PC-3 (cell line): ENCODE measurements at regions of chr12 and their contacts with region 1.

Region 1: DNA sequence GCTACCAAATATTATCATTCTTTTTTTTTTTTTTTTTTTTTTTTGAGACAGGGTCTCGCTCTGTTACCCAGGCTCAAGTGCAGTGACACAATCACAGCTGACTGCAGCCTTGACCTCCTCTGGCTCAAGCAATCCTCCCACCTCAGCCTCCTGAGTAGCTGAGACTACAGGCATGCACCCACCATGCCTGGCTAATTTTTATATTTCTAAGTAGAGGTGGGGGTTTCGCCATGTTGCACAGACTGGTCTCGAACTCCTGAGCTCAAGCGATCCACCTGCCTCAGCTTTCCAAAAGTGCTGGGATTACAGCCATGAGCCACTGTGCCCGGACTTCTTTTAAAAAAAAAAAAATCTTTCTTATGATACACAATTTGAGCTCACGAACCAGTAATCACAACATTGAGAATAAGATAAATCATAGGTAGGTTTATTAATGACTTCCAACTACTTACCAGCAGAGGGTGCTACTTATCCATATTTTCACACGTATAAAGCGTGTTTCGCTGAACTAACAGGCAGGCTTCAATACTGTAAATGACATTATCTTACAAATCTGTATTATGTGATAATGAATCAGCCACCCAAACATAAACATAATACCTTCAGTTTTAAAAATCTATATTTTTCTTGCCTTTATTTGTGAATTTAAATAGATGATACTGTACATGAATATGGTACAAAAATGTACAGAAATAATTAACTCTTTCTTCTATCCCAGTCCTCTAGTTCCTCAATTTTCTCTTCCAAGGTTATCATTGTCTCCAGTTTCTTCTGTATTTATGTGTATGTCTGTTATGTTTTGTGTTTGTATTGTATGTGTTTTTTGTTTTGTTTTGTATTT is 42.5 kb upstream of the BCAT1 start:
- DNase-seq: peak; percentile 65
- ATAC-seq: peak; percentile 54
- H3K4me3 ChIP-seq: no peak overlapping the region
- H3K27ac ChIP-seq: no peak overlapping the region
- H3K4me1 ChIP-seq: no peaks in the 10 kb centered on the region
- H3K27me3 ChIP-seq: peaks cover 13% of the 10 kb centered on the region
- CTCF ChIP-seq: peak; percentile 62

Region 2: GRCh38 chr12:24838531-24838950 is 152.9 kb before region 1 on chr12:
- CTCF ChIA-PET with region 1: no interaction called
- POLR2A ChIA-PET with region 1: no interaction called
- intact Hi-C with region 1: no loop called
- DNase-seq: no peak
- ATAC-seq: no peak
- H3K4me3 ChIP-seq: no peak overlapping the region
- H3K27ac ChIP-seq: no peak overlapping the region
- H3K4me1 ChIP-seq: no peaks in the 10 kb centered on the region
- H3K27me3 ChIP-seq: peaks cover 5% of the 10 kb centered on the region; the same call in 1 of the 2 replicates
- CTCF ChIP-seq: no peak

Region 3: DNA sequence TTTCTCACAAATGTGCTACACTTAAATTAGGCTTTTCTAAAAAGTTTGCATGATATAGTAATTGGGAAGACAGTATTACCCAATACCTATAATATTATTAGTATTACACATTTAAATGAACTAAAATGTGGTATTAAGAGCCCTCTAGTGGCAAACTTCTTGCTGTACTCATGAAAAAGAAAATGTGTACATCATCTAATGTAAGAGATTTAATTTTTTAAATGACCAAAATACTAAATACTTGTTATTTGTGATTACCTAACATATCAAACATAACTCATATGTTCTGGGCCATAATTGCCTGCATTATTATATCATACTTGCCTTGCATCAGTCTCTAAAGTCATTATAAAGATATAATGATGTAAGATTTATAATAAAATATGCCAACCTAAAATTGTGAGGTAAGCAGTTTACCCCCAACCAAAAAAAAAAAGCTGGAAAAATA is 139.3 kb after region 1 on chr12:
- CTCF ChIA-PET with region 1: no interaction called
- POLR2A ChIA-PET with region 1: no interaction called
- intact Hi-C with region 1: loop called (anchors 1 kb)
- DNase-seq: peak; percentile 60
- ATAC-seq: no peak
- H3K4me3 ChIP-seq: no peak overlapping the region
- H3K27ac ChIP-seq: no peak overlapping the region
- H3K4me1 ChIP-seq: no peaks in the 10 kb centered on the region
- H3K27me3 ChIP-seq: peaks cover 20% of the 10 kb centered on the region
- CTCF ChIP-seq: peak; percentile 65